CD4-positive, alpha-beta memory T cell (primary cell): ENCODE measurements at regions of chr1 and their contacts with region 1.

Region 1: DNA sequence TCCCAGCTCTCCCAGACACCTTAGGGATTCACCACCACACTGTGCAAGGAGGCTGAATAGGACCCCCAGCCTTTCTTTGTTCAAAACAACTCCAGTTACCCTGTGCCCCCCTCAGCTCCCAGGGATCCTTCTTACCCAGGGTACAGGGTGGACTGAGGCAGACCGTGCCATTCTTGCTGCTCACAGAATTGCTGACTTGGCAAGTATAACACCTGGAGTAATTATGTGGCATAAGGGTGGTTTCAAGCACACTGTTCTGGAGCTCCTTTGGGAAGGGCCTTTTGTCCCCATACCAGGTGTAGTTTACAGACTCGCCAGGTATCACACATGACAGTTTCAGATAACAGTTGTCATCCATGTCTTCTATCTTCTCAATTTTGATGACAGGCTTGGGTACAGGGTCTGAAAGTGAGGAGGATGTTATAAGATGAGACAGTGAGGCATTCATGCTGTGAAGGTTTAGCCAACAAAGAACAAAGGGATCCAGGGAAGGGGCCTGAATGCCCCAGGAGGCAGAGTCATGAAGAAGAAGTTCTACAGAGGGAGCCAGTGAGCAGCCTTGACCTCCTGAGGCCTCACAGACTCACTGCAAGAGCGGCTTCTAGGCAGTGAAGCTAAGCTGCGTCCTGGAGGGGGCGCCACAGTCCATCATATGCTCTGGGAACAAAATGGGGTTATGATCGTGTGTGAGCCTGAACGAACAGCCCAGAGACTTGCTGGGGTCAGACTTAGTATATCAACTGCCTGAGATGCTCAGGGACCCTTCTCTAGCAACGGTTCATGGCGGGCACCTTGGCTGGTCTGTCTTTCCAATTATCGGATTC is 30.3 kb downstream of the CD48 start:
- DNase-seq: peak; percentile 82 to 88 (median 85)
- H3K4me3 ChIP-seq: no peak overlapping the region
- H3K4me3 Mint-ChIP-seq: peak overlapping the region in 5 of 8 donors; percentile 15 to 58 (median 26)
- H3K27ac ChIP-seq: peak overlapping the region; percentile 55
- H3K27ac Mint-ChIP-seq: peak overlapping the region; percentile 67 to 97 (median 91)
- H3K4me1 ChIP-seq: peaks cover 55% of the 10 kb centered on the region
- H3K4me1 Mint-ChIP-seq: peaks cover 49 to 69% (median 53%) of the 10 kb centered on the region in 4 donors
- H3K27me3 ChIP-seq: no peaks in the 10 kb centered on the region
- H3K27me3 Mint-ChIP-seq: no peaks in the 10 kb centered on the region

Region 2: DNA sequence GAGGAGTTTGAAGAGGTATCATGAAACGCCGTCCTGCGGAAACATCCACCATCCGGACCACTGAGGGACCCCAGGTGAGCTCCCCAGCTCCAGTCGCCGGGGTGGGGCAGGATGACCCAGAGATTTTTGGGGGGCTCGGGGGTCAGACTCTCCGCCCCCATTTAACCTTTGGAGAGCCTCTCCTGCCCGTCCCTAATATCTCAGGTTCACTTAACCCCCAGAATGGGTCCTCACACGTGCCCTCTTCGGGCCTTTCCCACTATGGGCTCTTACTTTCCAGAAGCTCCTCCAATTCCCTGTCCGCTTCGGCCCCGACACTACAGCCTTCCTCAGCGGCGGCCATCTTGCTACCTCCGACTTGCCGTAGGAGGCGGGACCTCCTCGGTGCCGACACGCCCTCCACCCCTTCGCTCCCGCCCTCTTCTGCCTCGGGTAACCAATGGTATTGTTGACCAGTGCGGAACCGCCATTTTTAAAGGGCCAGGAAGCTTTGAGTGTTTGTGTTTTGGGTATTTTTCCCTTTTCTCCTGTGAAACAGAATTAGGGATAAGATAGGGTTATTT is 396.4 kb before region 1 on chr1 and contains the start of gene PEX19:
- CTCF ChIA-PET with region 1: no interaction called
- POLR2A ChIA-PET with region 1: no interaction called
- intact Hi-C with region 1: no loop called
- DNase-seq: peak; percentile 90 to 95 (median 92)
- H3K4me3 ChIP-seq: peak within 1 kb of the TSS; percentile 53 to 98
- H3K4me3 Mint-ChIP-seq: peak within 1 kb of the TSS; percentile 98 to 100 (median 99)
- H3K27ac ChIP-seq: peak within 1 kb of the TSS; percentile 81
- H3K27ac Mint-ChIP-seq: peak within 1 kb of the TSS; percentile 71 to 99 (median 98)
- H3K4me1 ChIP-seq: peaks cover 24% of the 10 kb centered on the region
- H3K4me1 Mint-ChIP-seq: peaks cover 20 to 44% (median 28%) of the 10 kb centered on the region in 4 donors
- H3K27me3 ChIP-seq: no peaks in the 10 kb centered on the region
- H3K27me3 Mint-ChIP-seq: no peaks in the 10 kb centered on the region
- total RNA-seq, gene PEX19: 53.5 to 60.6 TPM

Region 3: DNA sequence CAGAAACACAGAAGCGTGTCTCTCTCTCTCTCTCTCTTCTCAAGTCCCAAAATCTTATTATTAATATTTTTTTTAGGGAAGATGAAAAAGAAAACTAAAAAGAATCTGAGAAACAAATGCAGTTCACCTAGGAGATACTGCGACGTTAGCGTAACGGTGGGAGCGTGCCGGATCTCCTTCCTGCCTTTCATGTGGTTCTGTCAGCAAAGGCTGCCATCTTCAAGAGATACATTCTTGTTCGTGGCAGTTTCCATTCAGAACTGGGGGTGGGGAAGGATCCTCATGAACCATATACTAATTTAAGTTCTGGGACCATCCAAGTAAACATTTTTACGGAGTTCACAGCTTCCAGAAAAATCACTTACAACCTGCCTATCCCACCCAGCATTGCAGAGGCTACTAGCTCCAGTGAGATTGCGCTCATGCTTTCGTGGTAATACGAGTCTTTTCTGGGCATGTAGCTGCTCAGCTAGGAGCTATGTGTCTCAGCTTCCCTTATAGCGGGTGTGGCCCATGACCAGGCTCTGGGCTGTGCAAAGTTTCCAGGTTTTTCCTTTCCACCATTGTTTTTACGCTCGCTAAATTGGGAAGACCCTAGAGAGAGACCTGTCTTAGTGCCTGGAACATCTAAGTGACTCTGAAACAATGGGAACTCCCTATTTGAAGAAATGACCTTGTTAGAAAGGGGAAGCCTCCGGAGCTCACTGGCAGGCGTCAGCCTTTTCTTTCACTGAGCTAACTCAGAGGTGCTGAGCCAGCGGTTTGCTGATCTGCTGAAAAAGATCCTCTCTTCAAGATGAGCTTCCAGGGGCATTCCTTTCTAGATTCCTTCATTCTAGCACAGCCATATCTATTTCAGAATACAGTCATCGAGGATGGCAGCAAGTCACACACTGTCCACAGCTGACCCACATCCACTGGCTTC is 51.7 kb before region 1 on chr1:
- CTCF ChIA-PET with region 1: interaction called, 139 read pairs
- POLR2A ChIA-PET with region 1: interaction called, 66 read pairs
- intact Hi-C with region 1: no loop called
- DNase-seq: peak; percentile 88 to 94 (median 91)
- H3K4me3 ChIP-seq: peak overlapping the region; percentile 18 to 36
- H3K4me3 Mint-ChIP-seq: peak overlapping the region; percentile 80 to 91 (median 84)
- H3K27ac ChIP-seq: peak overlapping the region; percentile 93
- H3K27ac Mint-ChIP-seq: peak overlapping the region; percentile 87 to 100 (median 99)
- H3K4me1 ChIP-seq: peaks cover 98% of the 10 kb centered on the region
- H3K4me1 Mint-ChIP-seq: peaks cover 82 to 100% (median 93%) of the 10 kb centered on the region in 4 donors
- H3K27me3 ChIP-seq: no peaks in the 10 kb centered on the region
- H3K27me3 Mint-ChIP-seq: no peaks in the 10 kb centered on the region

Region 4: GRCh38 chr1:160711602-160712311 is 30.5 kb after region 1 on chr1 and contains the start of gene CD48:
- CTCF ChIA-PET with region 1: interaction called, 103 read pairs
- POLR2A ChIA-PET with region 1: interaction called, 85 read pairs
- intact Hi-C with region 1: loop called (anchors 1 kb)
- DNase-seq: peak; percentile 67 to 80 (median 78)
- H3K4me3 ChIP-seq: peak within 1 kb of the TSS; percentile 88 to 96
- H3K4me3 Mint-ChIP-seq: no peak within 1 kb of the TSS
- H3K27ac ChIP-seq: peak within 1 kb of the TSS; percentile 96
- H3K27ac Mint-ChIP-seq: peak within 1 kb of the TSS in 1 of 7 donors; percentile 95
- H3K4me1 ChIP-seq: peaks cover 62% of the 10 kb centered on the region
- H3K4me1 Mint-ChIP-seq: peaks cover 17 to 31% (median 29%) of the 10 kb centered on the region in 4 donors
- H3K27me3 ChIP-seq: no peaks in the 10 kb centered on the region
- H3K27me3 Mint-ChIP-seq: no peaks in the 10 kb centered on the region
- total RNA-seq, gene CD48: 301 to 329 TPM

Region 5: GRCh38 chr1:160777486-160778089 is 96.3 kb after region 1 on chr1:
- CTCF ChIA-PET with region 1: interaction called, 27 read pairs
- POLR2A ChIA-PET with region 1: no interaction called
- intact Hi-C with region 1: no loop called
- DNase-seq: peak; percentile 69 to 75 (median 71)
- H3K4me3 ChIP-seq: no peak overlapping the region
- H3K4me3 Mint-ChIP-seq: no peak overlapping the region
- H3K27ac ChIP-seq: no peak overlapping the region
- H3K27ac Mint-ChIP-seq: peak overlapping the region in 3 of 7 donors; percentile 47 to 81 (median 58)
- H3K4me1 ChIP-seq: peaks cover 22% of the 10 kb centered on the region
- H3K4me1 Mint-ChIP-seq: peaks cover 17 to 25% (median 21%) of the 10 kb centered on the region in 4 donors
- H3K27me3 ChIP-seq: no peaks in the 10 kb centered on the region
- H3K27me3 Mint-ChIP-seq: peaks cover 0 to 2% of the 10 kb centered on the region in 2 donors

Region 6: DNA sequence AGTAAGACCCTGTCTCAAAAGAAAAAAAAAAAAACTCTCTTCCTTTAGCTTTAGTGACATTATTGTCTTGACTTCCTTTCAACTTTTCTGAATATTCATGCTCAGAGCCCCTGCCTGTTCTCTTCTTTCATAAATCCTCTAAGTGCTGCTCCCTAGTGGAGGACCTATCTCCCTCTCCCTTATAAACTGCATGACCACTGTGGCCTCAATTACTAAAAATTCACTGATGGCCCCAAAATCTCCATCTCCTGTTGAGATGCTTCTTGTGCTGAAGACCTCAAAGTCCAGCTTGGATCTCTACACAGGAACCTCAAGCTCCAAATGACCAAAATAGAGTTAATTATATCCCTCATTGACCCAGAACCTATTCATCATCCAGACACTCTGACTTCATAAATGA is 195.9 kb after region 1 on chr1:
- CTCF ChIA-PET with region 1: interaction called, 12 read pairs
- POLR2A ChIA-PET with region 1: no interaction called
- intact Hi-C with region 1: no loop called
- DNase-seq: peak in 4 of 5 donors; percentile 45 to 56 (median 54)
- H3K4me3 ChIP-seq: no peak overlapping the region
- H3K4me3 Mint-ChIP-seq: peak overlapping the region in 1 of 8 donors; percentile 15
- H3K27ac ChIP-seq: no peak overlapping the region
- H3K27ac Mint-ChIP-seq: peak overlapping the region in 2 of 7 donors; percentile 1 to 2
- H3K4me1 ChIP-seq: peaks cover 7% of the 10 kb centered on the region
- H3K4me1 Mint-ChIP-seq: peaks cover 5 to 22% (median 6%) of the 10 kb centered on the region in 4 donors
- H3K27me3 ChIP-seq: no peaks in the 10 kb centered on the region
- H3K27me3 Mint-ChIP-seq: peaks cover 0 to 6% of the 10 kb centered on the region in 2 donors

Region 7: GRCh38 chr1:160997323-160998038 is 316.2 kb after region 1 on chr1:
- CTCF ChIA-PET with region 1: no interaction called
- POLR2A ChIA-PET with region 1: no interaction called
- intact Hi-C with region 1: loop called (anchors 5 kb)
- DNase-seq: peak in 4 of 5 donors; percentile 30 to 42 (median 38)
- H3K4me3 ChIP-seq: no peak overlapping the region
- H3K4me3 Mint-ChIP-seq: no peak overlapping the region
- H3K27ac ChIP-seq: no peak overlapping the region
- H3K27ac Mint-ChIP-seq: peak overlapping the region; percentile 22 to 93 (median 84)
- H3K4me1 ChIP-seq: peaks cover 8% of the 10 kb centered on the region
- H3K4me1 Mint-ChIP-seq: peaks cover 4 to 8% (median 5%) of the 10 kb centered on the region in 4 donors
- H3K27me3 ChIP-seq: no peaks in the 10 kb centered on the region
- H3K27me3 Mint-ChIP-seq: no peaks in the 10 kb centered on the region

Region 8: GRCh38 chr1:161915051-161915503 is 1233.8 kb after region 1 on chr1:
- CTCF ChIA-PET with region 1: no interaction called
- POLR2A ChIA-PET with region 1: no interaction called
- intact Hi-C with region 1: no loop called
- DNase-seq: no peak
- H3K4me3 ChIP-seq: no peak overlapping the region
- H3K4me3 Mint-ChIP-seq: no peak overlapping the region
- H3K27ac ChIP-seq: no peak overlapping the region
- H3K27ac Mint-ChIP-seq: no peak overlapping the region
- H3K4me1 ChIP-seq: peaks cover 17% of the 10 kb centered on the region
- H3K4me1 Mint-ChIP-seq: peaks cover 15 to 17% (median 16%) of the 10 kb centered on the region in 4 donors
- H3K27me3 ChIP-seq: no peaks in the 10 kb centered on the region
- H3K27me3 Mint-ChIP-seq: no peaks in the 10 kb centered on the region